ENCODE measurements at regions of chr17 and their contacts with region 1.

Region 1: GRCh38 chr17:77741109-77741508 is 217.4 kb upstream of the TNRC6C start:
- DNase-seq: peak; percentile 83
- H3K4me3 Mint-ChIP-seq: no peak overlapping the region
- H3K27ac Mint-ChIP-seq: no peak overlapping the region
- H3K4me1 Mint-ChIP-seq: no peaks in the 10 kb centered on the region
- H3K27me3 Mint-ChIP-seq: no peaks in the 10 kb centered on the region

Region 2: DNA sequence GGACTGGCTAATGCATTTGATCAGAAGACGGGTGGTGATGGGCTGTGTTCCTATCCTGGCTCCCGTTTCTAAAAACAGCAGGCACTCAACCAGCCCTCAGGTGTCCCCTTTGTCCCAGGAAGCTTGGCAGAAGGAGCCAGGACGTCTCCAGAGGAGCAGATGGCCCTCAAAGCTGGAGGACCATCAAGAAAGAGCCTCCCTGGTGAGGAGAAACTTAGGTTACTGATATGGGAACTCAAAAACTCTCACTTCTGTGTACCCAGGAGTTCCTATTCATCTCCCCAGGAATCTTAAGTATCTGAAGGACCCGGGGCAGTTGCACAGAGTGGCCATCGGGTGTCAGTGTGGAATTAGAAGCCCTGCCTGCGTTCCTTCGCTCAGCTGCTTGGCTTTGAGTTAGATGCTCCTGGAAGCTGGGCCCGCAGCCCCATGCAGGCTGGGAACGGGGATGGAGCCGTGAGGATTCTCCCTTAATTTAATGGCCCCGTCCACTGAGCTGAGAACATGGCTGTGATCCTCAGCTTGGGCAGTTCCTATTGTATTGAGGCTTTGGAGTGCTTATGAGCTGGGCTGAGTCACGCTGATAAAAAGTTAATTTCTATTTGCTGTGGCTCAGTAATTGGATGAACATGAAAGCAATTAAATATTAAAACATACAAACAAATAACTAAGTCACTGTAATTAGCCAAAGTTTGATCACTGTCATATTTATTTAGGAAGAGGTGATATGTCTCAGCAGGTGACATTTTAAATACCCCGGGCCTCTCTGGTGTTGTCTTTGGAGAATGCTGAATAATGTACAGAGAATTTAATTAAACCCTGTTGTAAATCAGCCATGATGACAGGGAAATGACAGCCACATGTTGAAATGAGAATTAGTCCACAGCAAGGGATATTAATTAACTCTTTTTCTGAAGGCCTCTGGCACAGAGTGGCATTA is 198.3 kb before region 1 on chr17:
- CTCF ChIA-PET with region 1: interaction called, 6 read pairs
- intact Hi-C with region 1: loop called (anchors 1 kb)
- DNase-seq: peak; percentile 82
- H3K4me3 Mint-ChIP-seq: no peak overlapping the region
- H3K27ac Mint-ChIP-seq: no peak overlapping the region
- H3K4me1 Mint-ChIP-seq: no peaks in the 10 kb centered on the region
- H3K27me3 Mint-ChIP-seq: no peaks in the 10 kb centered on the region

Measured in activated naive CD4-positive, alpha-beta T cell treated with anti-CD3 and anti-CD28 coated beads for 36 hours (primary cell).